KBM-7 (cell line): ENCODE measurements at regions of chr3 and their contacts with region 1.

Region 1: GRCh38 chr3:66500576-66501482 is at the start of gene LRIG1:
- DNase-seq: peak; percentile 95

Region 2: GRCh38 chr3:66407611-66408218 is 93.1 kb before region 1 on chr3:
- in situ Hi-C with region 1: loop called (anchors 25 kb)
- DNase-seq: peak; percentile 72

Region 3: DNA sequence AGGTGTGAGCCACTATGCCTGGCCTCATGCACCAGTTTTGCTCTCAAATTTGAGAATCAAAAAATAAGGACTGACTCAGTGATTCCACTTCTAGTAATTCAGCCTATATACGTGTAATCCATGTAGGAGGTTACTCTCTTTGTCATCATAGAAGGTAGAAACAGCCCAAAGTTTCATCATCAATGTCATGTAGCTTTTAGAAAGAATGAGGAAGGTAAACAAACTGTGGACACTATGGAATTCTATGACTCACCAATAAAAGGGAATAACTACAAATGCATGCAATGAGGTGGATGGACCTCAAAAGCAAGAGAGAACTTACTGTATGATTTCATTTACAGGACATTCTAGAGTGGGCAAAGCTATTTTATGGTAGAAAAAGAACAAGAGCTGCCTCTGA is 93.1 kb after region 1 on chr3:
- in situ Hi-C with region 1: no loop called
- DNase-seq: no peak